ENCODE measurements at regions of chr3 and their contacts with region 1.

Region 1: DNA sequence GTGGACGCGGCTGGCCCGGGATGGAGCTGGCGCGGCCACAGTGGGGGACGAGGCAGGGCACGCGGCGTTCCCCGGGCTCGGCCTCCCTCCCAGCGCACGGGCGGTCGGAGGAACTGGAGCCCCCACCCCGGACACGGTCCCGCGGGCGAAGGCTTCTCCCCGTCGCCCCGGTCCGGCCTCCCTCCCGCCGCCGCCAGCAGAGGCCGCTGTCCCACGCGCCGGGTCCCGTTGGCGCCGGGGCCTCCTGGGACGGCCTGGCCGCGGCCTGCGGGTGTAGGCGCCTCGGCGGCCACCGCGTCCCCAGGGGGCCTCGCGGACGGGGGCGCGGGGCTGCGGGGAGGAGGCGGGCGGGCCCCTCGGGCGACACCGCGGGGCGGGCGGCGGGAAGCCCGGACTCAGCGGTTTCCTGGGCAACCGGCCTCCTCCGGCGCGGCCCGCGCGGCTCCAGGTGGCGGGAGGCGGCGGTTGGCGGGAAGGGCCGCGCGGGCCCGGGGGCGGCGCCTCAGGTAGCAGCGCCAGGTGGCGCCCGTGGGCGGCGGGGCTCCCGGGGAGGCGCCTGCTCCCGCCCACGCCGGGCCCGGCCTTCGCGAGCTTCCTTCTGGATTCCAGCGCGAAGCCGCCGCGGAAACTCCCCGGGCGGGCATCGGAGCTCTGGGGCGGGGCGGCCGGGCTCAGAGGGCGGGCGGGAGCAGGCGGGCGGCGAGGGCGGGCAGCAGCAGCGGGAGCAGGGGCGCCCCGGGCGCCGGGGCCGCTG is 26.7 kb downstream of the MELTF start:
- DNase-seq: peak; percentile 86
- H3K4me3 ChIP-seq: peak overlapping the region; percentile 71
- H3K27ac ChIP-seq: no peak overlapping the region
- H3K4me1 ChIP-seq: peaks cover 25% of the 10 kb centered on the region
- CTCF ChIP-seq: peak; percentile 68

Region 2: DNA sequence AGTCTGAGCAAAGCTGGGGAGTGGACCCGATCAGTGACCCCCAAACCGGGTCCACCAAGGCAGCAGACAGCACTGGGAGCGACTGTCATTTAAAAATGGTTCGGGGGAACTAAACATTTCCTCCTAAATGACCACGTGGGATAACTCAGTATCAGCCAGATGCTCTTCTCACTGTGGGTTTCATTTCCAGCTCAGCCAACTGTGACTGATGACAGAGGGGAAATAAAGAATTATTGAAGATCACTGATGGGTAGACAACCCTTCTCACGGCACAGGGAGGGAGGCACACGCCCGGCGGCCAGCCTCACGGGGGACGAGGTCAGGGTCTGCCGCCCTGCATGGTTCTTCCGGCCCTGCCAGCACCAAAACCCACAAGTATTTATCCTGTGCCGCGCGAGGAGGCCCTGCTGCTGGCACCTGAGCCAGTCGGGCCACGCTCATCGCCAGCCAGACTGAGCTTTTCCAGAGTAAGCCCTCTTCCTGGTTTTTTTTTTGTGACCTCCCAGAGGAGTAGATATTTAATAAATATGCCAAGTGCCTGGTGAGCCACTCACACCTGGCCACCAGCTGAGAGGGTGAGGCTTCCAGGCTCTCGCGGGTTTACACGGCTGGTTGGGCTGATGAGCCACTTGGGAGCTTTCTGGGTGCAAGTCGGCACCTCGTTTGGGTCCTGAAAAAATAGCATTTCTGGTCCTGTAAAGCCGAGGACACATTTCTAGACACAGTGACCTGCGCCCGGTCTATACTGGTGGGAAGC is 20.5 kb after region 1 on chr3:
- CTCF ChIA-PET with region 1: interaction called, 4 read pairs
- POLR2A ChIA-PET with region 1: interaction called, 4 read pairs
- intact Hi-C with region 1: loop called (anchors 1 kb)
- DNase-seq: peak; percentile 82
- H3K4me3 ChIP-seq: peak overlapping the region; percentile 56
- H3K27ac ChIP-seq: peak overlapping the region; percentile 56
- H3K4me1 ChIP-seq: peaks cover 29% of the 10 kb centered on the region
- CTCF ChIP-seq: no peak

Region 3: DNA sequence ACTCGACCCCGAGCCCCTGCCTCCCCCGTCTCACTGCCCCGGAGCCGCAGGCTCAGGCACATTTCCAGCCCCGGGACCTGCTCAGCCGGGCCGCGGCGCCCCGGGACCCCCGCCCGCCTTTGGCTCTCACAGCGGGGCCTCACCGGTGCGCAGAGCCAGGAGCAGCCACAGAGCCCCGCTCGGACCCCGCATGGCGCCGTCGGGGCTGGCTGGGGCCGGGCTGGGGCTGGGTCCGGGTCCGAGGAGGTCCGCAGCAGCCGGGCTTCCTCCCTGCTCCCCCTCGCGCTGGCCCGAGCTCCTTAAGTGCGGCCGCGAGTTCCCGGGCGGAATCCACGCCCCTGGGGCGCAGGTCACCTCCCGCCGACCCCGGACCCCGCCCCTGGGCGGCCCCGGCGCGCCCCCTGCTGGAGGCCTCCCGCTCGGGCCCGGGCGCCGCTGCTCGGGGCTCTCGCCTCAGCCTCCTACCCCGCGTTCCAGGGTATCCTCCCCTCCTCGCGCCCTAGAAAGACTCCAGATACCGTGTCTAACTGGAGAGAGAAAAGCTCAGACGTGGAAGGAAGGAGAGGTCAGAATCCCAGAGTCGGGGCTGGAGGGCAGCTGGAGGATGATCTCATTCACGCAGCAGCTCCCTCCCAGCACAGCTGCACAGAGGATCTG is 26.8 kb after region 1 on chr3 and contains the start of gene MELTF:
- CTCF ChIA-PET with region 1: no interaction called
- POLR2A ChIA-PET with region 1: no interaction called
- intact Hi-C with region 1: loop called (anchors 1 kb)
- DNase-seq: peak; percentile 83
- H3K4me3 ChIP-seq: peak within 1 kb of the TSS; percentile 74
- H3K27ac ChIP-seq: no peak within 1 kb of the TSS
- H3K4me1 ChIP-seq: peaks cover 14% of the 10 kb centered on the region
- CTCF ChIP-seq: peak; percentile 89
- total RNA-seq, gene MELTF: 7.4 and 9.6 TPM in 2 replicates

Region 4: GRCh38 chr3:197186887-197187588 is 184.2 kb after region 1 on chr3:
- CTCF ChIA-PET with region 1: no interaction called
- POLR2A ChIA-PET with region 1: no interaction called
- intact Hi-C with region 1: loop called (anchors 1 kb)
- DNase-seq: peak; percentile 75
- H3K4me3 ChIP-seq: no peak overlapping the region
- H3K27ac ChIP-seq: no peak overlapping the region
- H3K4me1 ChIP-seq: peaks cover 15% of the 10 kb centered on the region
- CTCF ChIP-seq: peak; percentile 99

Region 5: GRCh38 chr3:197516517-197516889 is 513.6 kb after region 1 on chr3:
- CTCF ChIA-PET with region 1: no interaction called
- POLR2A ChIA-PET with region 1: no interaction called
- intact Hi-C with region 1: loop called (anchors 10 kb)
- DNase-seq: no peak
- H3K4me3 ChIP-seq: no peak overlapping the region
- H3K27ac ChIP-seq: no peak overlapping the region
- H3K4me1 ChIP-seq: peaks cover 9% of the 10 kb centered on the region
- CTCF ChIP-seq: no peak